ENCODE measurements at regions of chr6 and their contacts with region 1.

Region 1: DNA sequence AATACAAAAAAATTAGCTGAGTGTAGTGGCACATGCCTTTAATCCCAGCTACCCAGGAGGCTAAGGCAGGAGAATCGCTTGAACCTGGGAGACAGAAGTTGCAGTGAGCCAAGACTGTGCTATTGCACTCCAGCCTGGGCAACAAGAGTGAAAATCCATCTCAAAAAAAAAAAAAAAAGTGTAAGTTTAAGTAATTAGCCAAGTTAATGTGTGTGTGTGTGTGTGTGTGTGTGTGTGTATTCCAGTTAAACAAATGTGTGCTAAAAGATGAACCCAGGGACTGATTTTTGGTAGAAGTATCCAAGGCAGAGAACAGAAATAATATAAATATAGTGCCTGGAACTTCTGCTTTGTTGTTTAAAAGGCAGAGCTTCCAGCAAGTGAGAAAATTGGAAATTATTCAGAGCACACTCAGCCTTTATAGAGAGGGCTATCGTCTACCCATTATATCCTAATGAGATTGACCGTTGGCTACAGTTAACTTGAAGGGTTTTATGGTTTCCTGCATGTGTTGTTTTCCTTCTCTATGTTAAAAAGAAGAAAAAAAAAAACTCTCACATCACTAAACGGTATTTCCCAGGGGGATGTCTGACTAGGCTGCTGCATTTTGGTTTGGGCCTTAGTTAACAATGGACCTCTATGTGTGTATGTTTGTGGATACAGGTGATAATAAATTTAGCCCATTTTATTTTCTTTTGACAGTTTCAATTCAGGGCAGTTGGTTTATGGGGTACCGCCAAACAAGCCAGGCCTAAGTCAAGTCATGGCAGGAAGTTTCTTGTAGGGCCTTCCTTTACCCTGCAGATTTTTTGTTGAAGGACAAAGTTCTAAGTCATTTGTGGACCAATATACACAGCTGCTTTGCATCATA is 9.8 kb downstream of the SOX4 start:
- DNase-seq: no peak
- H3K4me3 ChIP-seq: no peak overlapping the region
- H3K27ac ChIP-seq: no peak overlapping the region
- H3K4me1 ChIP-seq: peaks cover 5% of the 10 kb centered on the region
- H3K27me3 ChIP-seq: no peaks in the 10 kb centered on the region
- CTCF ChIP-seq: no peak
- EP300 ChIP-seq: no peak
- POLR2A ChIP-seq: no peak

Region 2: DNA sequence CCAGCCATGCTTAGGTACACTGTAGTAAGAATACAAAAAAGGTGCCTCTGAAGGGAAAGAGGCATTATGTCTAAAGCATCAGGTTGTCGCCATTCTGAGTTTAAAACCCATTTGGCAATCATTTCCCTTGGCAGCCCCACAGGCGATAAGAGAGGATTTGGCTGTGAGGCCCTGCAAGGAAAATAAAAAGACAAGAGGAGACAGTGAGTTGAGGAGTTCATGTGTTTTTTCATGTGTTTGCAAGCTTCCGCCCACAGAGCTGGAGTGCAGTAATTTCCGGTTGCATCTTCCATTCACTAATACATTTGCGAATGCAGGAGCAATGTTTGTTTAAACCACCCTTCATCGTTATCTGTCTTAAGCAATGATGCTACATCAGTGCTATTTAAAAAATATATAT is 148.2 kb before region 1 on chr6:
- intact Hi-C with region 1: no loop called
- DNase-seq: no peak
- H3K4me3 ChIP-seq: no peak overlapping the region
- H3K27ac ChIP-seq: no peak overlapping the region
- H3K4me1 ChIP-seq: no peaks in the 10 kb centered on the region
- H3K27me3 ChIP-seq: no peaks in the 10 kb centered on the region
- CTCF ChIP-seq: no peak
- EP300 ChIP-seq: no peak
- POLR2A ChIP-seq: no peak

Region 3: DNA sequence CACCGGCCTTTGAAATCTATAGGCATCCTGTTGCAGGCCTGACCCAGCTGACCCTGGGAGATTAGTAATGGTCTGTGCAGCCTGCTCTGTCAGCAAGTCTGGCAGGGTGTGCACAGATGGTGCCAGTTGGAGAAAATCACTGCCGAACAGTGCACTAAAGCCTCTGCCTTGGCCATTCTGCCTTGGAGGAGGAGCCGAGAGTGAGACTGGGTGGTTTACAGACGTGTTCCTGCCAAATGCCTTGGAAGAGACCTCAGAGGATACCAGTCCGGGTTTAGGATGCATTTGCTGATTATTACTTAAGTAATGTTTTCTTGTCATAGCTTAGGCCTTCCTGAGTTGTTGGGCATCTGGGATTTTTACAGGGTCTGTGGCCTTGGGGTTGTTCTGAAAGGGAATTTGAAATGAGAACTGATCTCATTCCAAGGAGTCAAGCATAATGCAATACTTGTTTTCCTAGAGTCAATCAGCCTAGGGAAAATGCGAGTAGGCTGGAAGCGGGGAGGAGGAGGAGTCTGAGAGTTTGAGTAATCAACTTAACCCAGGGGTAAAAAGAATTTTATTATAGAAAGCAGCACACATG is 282.3 kb after region 1 on chr6:
- intact Hi-C with region 1: loop called in 1 of 4 experiments (anchors 10 kb)
- DNase-seq: peak; percentile 43 to 60 (median 55)
- H3K4me3 ChIP-seq: no peak overlapping the region
- H3K27ac ChIP-seq: peak overlapping the region in 1 of 2 donors; percentile 61
- H3K4me1 ChIP-seq: peaks cover 17% of the 10 kb centered on the region
- H3K27me3 ChIP-seq: no peaks in the 10 kb centered on the region
- CTCF ChIP-seq: no peak
- EP300 ChIP-seq: no peak
- POLR2A ChIP-seq: no peak